OCI-LY7 (cell line): ENCODE measurements at regions of chr12 and their contacts with region 1.

Region 1: DNA sequence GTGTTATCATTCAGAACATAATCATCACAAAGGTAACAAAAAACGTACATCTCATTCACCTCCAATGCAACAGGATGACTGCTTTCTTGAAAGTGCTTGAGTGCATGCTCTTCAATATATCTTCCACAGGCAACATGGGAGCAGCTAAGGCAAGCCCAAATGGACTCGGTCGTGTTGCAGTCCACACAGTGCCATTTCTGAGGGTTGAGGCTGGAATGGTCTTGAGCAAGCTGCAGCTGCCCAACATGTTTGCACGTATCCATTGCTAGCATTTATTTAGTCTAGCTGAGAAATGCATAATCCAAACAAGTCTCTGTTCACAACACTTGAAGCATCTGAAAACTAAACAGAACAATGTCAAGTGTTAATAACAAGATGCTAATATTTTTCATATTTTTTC is 17.3 kb downstream of the USP44 start:
- DNase-seq: no peak
- H3K4me3 ChIP-seq: no peak overlapping the region
- H3K27ac ChIP-seq: no peak overlapping the region
- H3K4me1 ChIP-seq: peaks cover 27% of the 10 kb centered on the region
- CTCF ChIP-seq: no peak

Region 2: DNA sequence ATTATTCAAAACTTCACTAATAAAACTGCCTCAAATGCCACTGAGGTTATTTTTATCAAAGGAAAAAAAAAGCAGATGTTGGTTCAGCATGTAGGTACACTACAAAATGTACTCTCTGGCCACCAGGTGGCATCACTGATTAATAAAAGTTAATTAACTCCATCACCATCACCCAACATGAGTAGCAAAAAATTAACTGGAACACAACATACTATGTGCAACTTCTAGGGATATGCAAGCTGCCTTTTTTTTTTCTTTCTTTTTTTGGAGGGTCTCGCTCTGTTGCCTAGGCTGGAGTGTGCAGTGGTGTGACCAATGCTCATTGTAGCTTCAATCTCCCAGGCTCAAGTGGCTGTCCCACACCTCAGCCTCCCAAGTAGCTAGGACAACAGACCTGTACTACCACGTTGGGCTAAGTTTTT is 416.8 kb before region 1 on chr12:
- CTCF ChIA-PET with region 1: no interaction called
- POLR2A ChIA-PET with region 1: interaction called, 3 read pairs
- intact Hi-C with region 1: loop called (anchors 1 kb)
- DNase-seq: peak; percentile 89
- H3K4me3 ChIP-seq: no peak overlapping the region
- H3K27ac ChIP-seq: no peak overlapping the region
- H3K4me1 ChIP-seq: peaks cover 8% of the 10 kb centered on the region
- CTCF ChIP-seq: peak; percentile 93

Region 3: DNA sequence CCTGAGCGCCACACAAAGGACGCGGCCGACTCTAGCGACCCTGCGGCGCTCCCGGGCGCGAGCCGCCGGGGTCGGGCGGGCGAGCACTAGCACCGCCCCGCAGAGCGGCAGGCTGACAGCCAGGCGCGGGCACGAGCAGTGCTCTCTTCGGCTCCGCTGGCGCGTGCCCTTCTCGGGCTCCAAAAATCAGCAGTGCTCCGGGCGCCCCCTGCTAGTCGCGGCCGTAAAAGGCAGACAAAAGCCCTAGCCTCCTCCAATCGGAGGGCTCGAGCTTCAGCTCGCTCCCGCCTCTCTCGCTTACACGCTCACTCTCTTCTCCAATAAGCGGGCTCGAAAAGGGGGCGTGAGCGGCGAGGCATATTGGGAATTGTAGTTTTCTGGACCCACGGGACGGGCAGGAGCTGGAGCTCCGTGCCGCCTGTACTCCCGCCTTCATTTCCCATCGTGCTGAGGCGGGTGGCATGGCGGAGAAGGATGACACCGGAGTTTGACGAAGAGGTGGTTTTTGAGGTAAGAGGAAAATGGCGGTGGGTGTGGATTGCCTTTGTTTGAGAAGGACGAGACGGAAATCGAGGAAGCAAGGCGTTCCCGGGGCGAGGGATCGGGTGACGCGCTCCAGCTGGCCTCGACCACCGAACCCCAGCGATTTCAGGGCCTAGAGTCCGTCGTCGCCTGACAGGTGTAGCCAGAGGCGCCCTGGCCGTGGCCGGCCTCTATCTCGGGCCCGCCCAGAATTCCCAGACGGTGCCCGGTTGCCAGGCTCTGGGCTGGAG is 316.4 kb before region 1 on chr12 and contains the starts of genes FGD6 and VEZT:
- CTCF ChIA-PET with region 1: no interaction called
- POLR2A ChIA-PET with region 1: no interaction called
- intact Hi-C with region 1: loop called (anchors 2 kb)
- DNase-seq: peak; percentile 100
- H3K4me3 ChIP-seq: peak within 1 kb of the TSS; percentile 85
- H3K27ac ChIP-seq: peak within 1 kb of the TSS; percentile 82
- H3K4me1 ChIP-seq: peaks cover 43% of the 10 kb centered on the region
- CTCF ChIP-seq: peak; percentile 76
- total RNA-seq, gene FGD6: 5.6 and 7.3 TPM in 2 replicates
- total RNA-seq, gene VEZT: 52.5 and 57.7 TPM in 2 replicates

Region 4: DNA sequence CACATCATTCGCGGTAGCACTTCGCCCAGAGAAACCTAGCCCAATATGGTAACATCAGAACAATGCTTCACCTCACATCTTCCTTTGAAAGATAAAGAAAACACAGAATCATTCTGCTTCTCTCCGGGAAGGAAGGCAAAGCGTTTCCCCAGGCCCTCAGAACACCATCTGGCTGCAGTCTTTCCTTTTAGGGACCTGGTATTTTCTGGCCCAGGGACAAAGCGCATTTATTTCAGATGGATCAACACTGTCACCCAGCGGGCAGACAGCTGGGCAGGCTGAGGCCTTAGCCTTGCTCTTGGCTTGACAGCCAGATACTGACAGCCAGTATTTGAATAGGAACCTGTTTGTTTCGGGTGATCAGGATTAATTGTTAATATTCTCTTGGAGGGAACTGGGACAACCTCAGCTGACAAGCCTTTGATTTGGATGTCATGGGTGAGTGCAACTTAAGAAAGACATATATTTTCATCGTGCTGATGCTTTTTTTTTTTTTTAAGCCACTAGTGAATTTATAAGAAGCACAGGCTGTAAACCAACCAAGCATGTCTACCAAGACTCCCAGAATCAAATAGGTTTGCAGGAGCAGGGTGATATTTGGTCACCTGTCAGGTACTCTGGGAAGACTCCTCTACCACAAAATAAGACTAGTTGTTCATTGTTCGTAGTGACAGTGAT is 197.5 kb before region 1 on chr12:
- CTCF ChIA-PET with region 1: no interaction called
- POLR2A ChIA-PET with region 1: interaction called, 8 read pairs
- intact Hi-C with region 1: loop called (anchors 1 kb)
- DNase-seq: peak; percentile 89
- H3K4me3 ChIP-seq: peak overlapping the region; percentile 59
- H3K27ac ChIP-seq: peak overlapping the region; percentile 68
- H3K4me1 ChIP-seq: peaks cover 80% of the 10 kb centered on the region
- CTCF ChIP-seq: peak; percentile 98

Region 5: DNA sequence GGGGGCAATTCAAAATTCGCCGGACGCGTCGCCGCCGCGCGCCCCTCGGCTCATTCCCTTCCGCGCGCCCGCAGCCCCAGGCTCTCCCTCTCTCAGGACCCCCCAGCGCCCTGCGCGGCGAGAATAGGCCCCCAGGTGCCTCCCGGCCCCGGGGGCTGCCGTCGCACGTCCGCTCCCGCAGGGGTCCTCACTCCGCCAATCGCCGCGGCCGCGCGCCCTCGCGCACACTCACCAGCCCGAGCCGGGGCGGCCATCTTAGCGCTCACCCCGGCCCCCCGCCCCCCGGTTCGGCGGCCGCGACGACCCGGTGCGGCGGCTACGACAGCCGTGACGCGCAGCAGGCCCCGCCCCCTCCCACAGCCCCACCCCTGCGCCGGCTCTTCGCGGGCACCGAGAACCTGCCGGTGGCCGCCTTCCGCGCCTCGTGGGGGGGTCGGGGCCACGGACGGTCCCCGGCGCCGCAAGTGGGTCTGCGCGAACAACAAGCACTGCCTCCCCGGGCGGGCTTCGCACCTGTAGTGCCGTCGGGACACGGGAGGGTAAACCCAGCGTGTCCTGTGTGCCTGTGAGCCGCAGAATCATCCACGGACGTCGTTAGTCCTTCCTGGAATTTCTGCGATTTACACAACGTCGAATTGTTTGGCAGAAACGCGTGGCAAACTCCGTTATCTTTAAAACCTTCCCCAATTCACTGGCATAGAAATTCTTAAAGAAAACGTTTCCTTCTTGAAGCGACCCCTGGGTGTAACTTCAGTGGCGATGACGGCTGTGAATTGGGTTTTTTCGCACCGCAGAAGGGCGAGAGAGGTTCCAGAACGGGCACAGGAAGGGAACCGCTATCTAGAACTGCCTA is 14.8 kb after region 1 on chr12:
- CTCF ChIA-PET with region 1: interaction called, 6 read pairs
- POLR2A ChIA-PET with region 1: interaction called, 10 read pairs
- intact Hi-C with region 1: no loop called
- DNase-seq: peak; percentile 58
- H3K4me3 ChIP-seq: peak overlapping the region; percentile 69
- H3K27ac ChIP-seq: peak overlapping the region; percentile 5
- H3K4me1 ChIP-seq: peaks cover 25% of the 10 kb centered on the region
- CTCF ChIP-seq: no peak

Region 6: GRCh38 chr12:95574799-95575452 is 40.9 kb after region 1 on chr12:
- CTCF ChIA-PET with region 1: no interaction called
- POLR2A ChIA-PET with region 1: interaction called, 10 read pairs
- intact Hi-C with region 1: no loop called
- DNase-seq: no peak
- H3K4me3 ChIP-seq: no peak overlapping the region
- H3K27ac ChIP-seq: peak overlapping the region; percentile 38
- H3K4me1 ChIP-seq: peaks cover 52% of the 10 kb centered on the region
- CTCF ChIP-seq: peak; percentile 88

Region 7: GRCh38 chr12:95790033-95790911 is 256.3 kb after region 1 on chr12 and contains the start of gene NTN4:
- CTCF ChIA-PET with region 1: no interaction called
- POLR2A ChIA-PET with region 1: no interaction called
- intact Hi-C with region 1: no loop called
- DNase-seq: no peak
- H3K4me3 ChIP-seq: no peak within 1 kb of the TSS
- H3K27ac ChIP-seq: no peak within 1 kb of the TSS
- H3K4me1 ChIP-seq: no peaks in the 10 kb centered on the region
- CTCF ChIP-seq: no peak
- total RNA-seq, gene NTN4: not detected in 2 replicates